Left lung (tissue), 14 donors: ENCODE measurements at regions of chr15 and their contacts with region 1.

Region 1: GRCh38 chr15:92917606-92918407 is 17.7 kb downstream of the CHD2 start:
- DNase-seq: peak; percentile 88 to 96 (median 92)
- ATAC-seq: peak; percentile 57
- H3K4me3 ChIP-seq: no peak overlapping the region
- H3K27ac ChIP-seq: peak overlapping the region; percentile 82 to 90
- H3K4me1 ChIP-seq: peaks cover 61 to 100% of the 10 kb centered on the region in 2 donors
- H3K27me3 ChIP-seq: no peaks in the 10 kb centered on the region
- CTCF ChIP-seq: peak; percentile 82 to 89

Region 2: DNA sequence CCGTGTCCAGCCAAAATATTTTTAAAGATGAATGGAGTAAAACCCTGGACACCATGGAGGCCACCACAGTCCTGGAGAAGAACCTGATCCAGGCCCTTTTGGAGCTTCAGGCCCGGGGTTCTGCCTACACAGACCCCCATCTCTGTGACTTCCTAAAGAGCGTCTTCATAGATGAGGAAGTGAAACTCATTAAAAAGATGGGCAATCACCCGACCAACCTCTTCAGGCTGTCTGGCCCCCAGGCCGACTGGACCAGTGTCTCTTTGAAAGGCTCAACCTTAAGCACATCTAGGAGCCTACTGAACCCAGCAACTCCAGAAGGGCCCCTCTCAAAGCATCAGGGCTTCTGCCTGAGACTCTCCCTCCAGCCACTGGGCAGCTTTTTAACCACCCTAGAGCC is 154.3 kb before region 1 on chr15:
- intact Hi-C with region 1: no loop called
- DNase-seq: peak in 1 of 4 donors; percentile 17
- ATAC-seq: no peak
- H3K4me3 ChIP-seq: no peak overlapping the region
- H3K27ac ChIP-seq: no peak overlapping the region
- H3K4me1 ChIP-seq: no peaks in the 10 kb centered on the region
- H3K27me3 ChIP-seq: no peaks in the 10 kb centered on the region
- CTCF ChIP-seq: no peak

Region 3: GRCh38 chr15:92803847-92804609 is 113.8 kb before region 1 on chr15:
- intact Hi-C with region 1: loop called in 1 of 2 experiments (anchors 5 kb)
- DNase-seq: peak; percentile 36 to 91 (median 85)
- ATAC-seq: peak; percentile 78
- H3K4me3 ChIP-seq: no peak overlapping the region
- H3K27ac ChIP-seq: peak overlapping the region; percentile 99 to 100
- H3K4me1 ChIP-seq: peaks cover 32 to 81% of the 10 kb centered on the region in 2 donors
- H3K27me3 ChIP-seq: no peaks in the 10 kb centered on the region
- CTCF ChIP-seq: no peak